Gastrocnemius medialis (tissue), 4 donors: ENCODE measurements at regions of chr2 and their contacts with region 1.

Region 1: GRCh38 chr2:233185963-233186362 is 65.5 kb upstream of the ATG16L1 start:
- DNase-seq: no peak
- ATAC-seq: no peak
- H3K4me3 ChIP-seq: no peak overlapping the region
- H3K27ac ChIP-seq: no peak overlapping the region
- H3K4me1 ChIP-seq: no peaks in the 10 kb centered on the region
- H3K27me3 ChIP-seq: no peaks in the 10 kb centered on the region
- CTCF ChIP-seq: no peak
- POLR2A ChIP-seq: no peak

Region 2: GRCh38 chr2:233210843-233211547 is 25.0 kb after region 1 on chr2:
- in situ Hi-C with region 1: no loop called
- intact Hi-C with region 1: loop called (anchors 1 kb)
- DNase-seq: peak in 1 of 2 donors; percentile 35
- ATAC-seq: peak in 1 of 2 donors; percentile 33
- H3K4me3 ChIP-seq: peak overlapping the region in 3 of 4 donors; percentile 11 to 36 (median 25)
- H3K27ac ChIP-seq: no peak overlapping the region
- H3K4me1 ChIP-seq: peaks cover 0 to 3% of the 10 kb centered on the region in 2 donors
- H3K27me3 ChIP-seq: no peaks in the 10 kb centered on the region
- CTCF ChIP-seq: no peak
- POLR2A ChIP-seq: no peak